Aorta (tissue), 5 donors: ENCODE measurements at regions of chr4 and their contacts with region 1.

Region 1: GRCh38 chr4:186725469-186726425 is 2.1 kb upstream of the FAT1 start:
- DNase-seq: peak; percentile 78 to 93
- ATAC-seq: peak; percentile 90
- H3K4me3 ChIP-seq: peak overlapping the region; percentile 38 to 90
- H3K27ac ChIP-seq: peak overlapping the region; percentile 54 to 97
- H3K4me1 ChIP-seq: no peaks in the 10 kb centered on the region
- H3K27me3 ChIP-seq: no peaks in the 10 kb centered on the region

Region 2: DNA sequence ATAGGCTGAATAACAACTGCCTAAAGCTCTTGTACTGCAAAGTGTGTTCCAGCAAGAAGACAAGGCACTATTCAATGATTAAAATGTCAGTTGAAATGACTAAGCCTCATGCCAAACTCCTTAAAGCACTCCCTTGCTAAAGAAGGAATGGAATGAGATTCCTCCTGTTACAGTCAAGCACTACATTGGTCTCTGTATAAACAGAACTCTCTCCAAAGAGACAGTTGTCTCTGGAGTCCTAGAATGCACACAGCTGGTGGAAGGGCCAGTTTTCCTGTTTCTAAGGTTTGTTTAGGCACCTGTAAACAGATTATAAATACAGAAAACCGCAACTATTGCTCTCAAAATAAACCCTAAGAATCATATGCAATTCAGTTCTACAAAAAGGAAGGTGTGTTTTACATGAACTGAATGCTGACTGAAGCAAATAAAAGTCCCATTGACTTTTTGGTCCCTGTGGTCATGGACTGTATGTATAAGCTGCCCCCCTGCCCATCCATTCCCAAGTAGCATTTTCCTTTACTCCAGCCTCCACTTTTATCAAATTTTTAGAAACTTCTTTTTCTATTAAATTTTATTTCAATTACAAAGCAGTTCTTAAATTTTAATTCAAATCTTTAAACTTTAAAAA is 49.1 kb before region 1 on chr4:
- intact Hi-C with region 1: loop called in 1 of 2 experiments (anchors 5 kb)
- DNase-seq: no peak
- ATAC-seq: peak; percentile 63
- H3K4me3 ChIP-seq: no peak overlapping the region
- H3K27ac ChIP-seq: no peak overlapping the region
- H3K4me1 ChIP-seq: peaks cover 0 to 6% of the 10 kb centered on the region in 2 donors
- H3K27me3 ChIP-seq: no peaks in the 10 kb centered on the region

Region 3: DNA sequence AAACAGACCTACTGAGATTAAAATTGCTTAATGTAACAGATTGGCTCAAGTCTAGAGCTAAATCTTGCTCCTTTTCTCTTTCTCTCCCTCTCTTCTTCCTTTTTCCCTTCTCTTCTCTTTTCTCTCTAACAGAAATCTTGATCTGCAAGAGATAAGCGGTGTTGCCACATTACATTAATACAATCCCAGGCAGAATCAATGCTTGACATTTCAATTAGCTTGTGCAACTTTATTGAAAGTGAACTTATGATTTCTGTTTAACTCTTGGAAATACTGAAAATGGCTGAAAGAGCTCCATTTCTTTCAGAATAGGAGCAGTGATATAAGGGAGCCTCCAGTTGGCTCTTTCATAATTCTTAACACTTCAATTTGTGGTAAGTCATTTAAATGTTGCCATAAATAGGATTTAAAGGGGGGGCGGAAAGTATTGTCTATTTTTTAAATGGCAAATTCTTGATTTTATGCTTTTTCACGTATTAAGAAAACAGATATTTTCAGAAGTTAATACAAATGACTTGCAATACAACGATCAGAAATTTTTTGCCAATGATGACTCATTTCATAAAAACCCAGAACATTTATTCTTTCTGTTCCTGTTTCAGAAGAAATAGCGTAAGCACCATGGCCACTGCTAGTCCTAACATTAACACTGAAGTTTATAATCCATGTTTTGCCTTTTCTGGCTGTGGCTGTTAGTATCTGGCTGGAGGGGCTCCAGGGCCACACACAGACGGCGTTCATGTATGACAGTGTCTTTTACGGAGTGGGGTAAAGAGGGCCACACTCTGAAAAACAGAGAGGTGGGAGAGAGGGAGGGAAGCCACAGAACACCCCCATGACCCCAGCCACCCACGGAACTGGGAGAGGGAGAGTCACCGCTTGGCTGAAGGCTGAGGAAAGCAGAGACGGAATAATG is 113.6 kb after region 1 on chr4:
- intact Hi-C with region 1: loop called (anchors 10 kb)
- DNase-seq: peak; percentile 62 to 79
- ATAC-seq: peak; percentile 75
- H3K4me3 ChIP-seq: no peak overlapping the region
- H3K27ac ChIP-seq: peak overlapping the region in 1 of 2 donors; percentile 55
- H3K4me1 ChIP-seq: peaks cover 1 to 3% of the 10 kb centered on the region in 2 donors
- H3K27me3 ChIP-seq: no peaks in the 10 kb centered on the region

Region 4: GRCh38 chr4:187283201-187283955 is 557.6 kb after region 1 on chr4:
- intact Hi-C with region 1: loop called in 1 of 2 experiments (anchors 10 kb)
- DNase-seq: no peak
- ATAC-seq: no peak
- H3K4me3 ChIP-seq: no peak overlapping the region
- H3K27ac ChIP-seq: no peak overlapping the region
- H3K4me1 ChIP-seq: peaks cover 0 to 1% of the 10 kb centered on the region in 2 donors
- H3K27me3 ChIP-seq: no peaks in the 10 kb centered on the region

Region 5: GRCh38 chr4:187606581-187606980 is 880.8 kb after region 1 on chr4:
- intact Hi-C with region 1: loop called in 1 of 2 experiments (anchors 5 kb)
- DNase-seq: no peak
- ATAC-seq: no peak
- H3K4me3 ChIP-seq: no peak overlapping the region
- H3K27ac ChIP-seq: no peak overlapping the region
- H3K4me1 ChIP-seq: no peaks in the 10 kb centered on the region
- H3K27me3 ChIP-seq: no peaks in the 10 kb centered on the region

Region 6: GRCh38 chr4:188372826-188373225 is 1647.1 kb after region 1 on chr4:
- intact Hi-C with region 1: loop called in 1 of 2 experiments (anchors 5 kb)
- DNase-seq: no peak
- ATAC-seq: peak; percentile 86
- H3K4me3 ChIP-seq: no peak overlapping the region
- H3K27ac ChIP-seq: no peak overlapping the region
- H3K4me1 ChIP-seq: no peaks in the 10 kb centered on the region
- H3K27me3 ChIP-seq: no peaks in the 10 kb centered on the region